ENCODE measurements at regions of chr9 and their contacts with region 1.

Region 1: GRCh38 chr9:134333234-134333873 is 7.1 kb downstream of the RXRA start:
- DNase-seq: peak; percentile 61
- ATAC-seq: no peak

Region 2: GRCh38 chr9:134434894-134435506 is 101.6 kb after region 1 on chr9:
- intact Hi-C with region 1: loop called (anchors 5 kb)
- DNase-seq: peak; percentile 97
- ATAC-seq: peak; percentile 87

Measured in Right ventricle myocardium superior (tissue), 1 donor.